WTC11 (cell line): ENCODE measurements at regions of chr14 and their contacts with region 1.

Region 1: DNA sequence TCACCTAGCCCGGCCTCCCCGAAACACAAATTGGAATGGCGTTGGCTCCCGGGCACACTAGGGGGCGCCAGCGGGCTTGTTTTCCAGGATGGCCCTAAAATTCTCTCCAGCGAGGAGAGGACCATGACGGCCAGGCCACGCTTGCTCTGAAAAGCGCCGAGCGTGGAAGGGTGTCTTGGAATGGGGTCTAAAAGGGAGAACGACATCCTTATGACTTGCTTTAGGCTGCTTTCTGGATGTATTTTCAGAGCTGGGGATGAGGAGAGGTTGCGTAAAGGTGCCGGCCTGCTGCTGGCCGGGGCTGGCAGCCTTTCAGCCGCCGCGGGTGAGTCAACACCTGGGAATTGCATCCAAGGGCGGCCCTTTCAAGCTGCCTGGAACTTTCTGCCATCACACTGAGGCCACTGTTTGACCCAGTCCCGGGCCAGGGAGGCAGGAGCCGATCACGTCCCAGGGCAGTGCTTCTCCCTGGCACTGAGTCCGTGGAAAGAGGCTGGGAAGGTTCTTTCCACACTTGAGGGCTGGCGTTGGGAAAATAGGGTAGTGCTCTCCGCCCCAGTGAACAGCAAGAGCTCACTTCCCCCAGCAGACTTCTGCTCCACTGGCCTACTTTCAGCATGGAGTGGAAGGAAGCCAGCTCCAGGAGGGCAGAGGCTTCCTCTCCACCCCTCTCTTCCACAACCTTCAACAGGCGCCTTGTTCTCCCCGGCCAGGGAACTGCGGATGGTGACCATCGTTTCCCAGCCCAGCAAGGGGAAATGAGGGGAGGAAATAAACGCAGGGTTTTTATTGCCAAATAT is 216.2 kb downstream of the TTC8 start:
- DNase-seq: peak; percentile 94
- ATAC-seq: peak; percentile 87
- H3K4me3 Mint-ChIP-seq: peak overlapping the region; percentile 61
- H3K27ac Mint-ChIP-seq: peak overlapping the region; percentile 58
- H3K4me1 Mint-ChIP-seq: peaks cover 19% of the 10 kb centered on the region
- H3K27me3 Mint-ChIP-seq: peaks cover 26% of the 10 kb centered on the region
- CTCF ChIP-seq: peak; percentile 96

Region 2: GRCh38 chr14:89027097-89027740 is 13.4 kb before region 1 on chr14:
- CTCF ChIA-PET with region 1: interaction called, 17 read pairs
- POLR2A ChIA-PET with region 1: no interaction called
- DNase-seq: peak; percentile 75
- ATAC-seq: peak; percentile 72
- H3K4me3 Mint-ChIP-seq: peak overlapping the region; percentile 83
- H3K27ac Mint-ChIP-seq: no peak overlapping the region
- H3K4me1 Mint-ChIP-seq: no peaks in the 10 kb centered on the region
- H3K27me3 Mint-ChIP-seq: peaks cover 77% of the 10 kb centered on the region
- CTCF ChIP-seq: peak; percentile 95

Region 3: DNA sequence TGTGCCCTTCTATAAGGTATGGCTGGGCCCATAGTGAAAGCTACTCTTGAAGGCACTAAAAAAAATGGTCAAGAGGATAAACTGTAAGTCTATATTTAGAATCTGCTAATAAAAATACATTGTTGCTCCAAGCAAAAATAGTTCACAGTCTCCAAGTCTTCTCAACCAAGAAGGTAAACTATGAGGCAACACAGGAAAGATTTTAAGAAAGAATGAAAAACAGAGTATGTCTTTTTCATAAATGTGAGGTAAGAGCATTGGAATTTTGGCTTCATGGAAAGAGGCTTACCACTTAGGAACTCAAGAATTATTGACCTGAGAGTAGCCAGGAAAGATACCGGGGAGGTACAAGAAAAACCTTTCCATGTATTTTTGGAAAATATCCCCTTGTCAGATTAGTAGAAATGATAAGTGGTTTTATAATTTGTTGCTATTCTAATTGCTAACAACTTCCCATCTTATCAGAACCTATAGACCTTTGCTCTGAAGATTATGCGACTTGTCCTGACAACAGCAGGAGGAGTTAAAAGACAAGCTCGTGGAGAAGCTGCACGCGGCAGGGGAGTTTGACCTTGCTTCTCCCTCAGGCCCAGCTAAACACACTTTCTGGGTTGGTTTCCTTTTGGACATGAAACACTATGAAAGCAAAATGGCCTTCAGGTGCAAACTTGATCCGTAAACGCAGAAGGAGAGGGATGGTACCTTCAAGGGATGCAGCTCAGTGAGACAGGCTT is 138.3 kb after region 1 on chr14:
- CTCF ChIA-PET with region 1: interaction called, 14 read pairs
- POLR2A ChIA-PET with region 1: no interaction called
- DNase-seq: no peak
- ATAC-seq: no peak
- H3K4me3 Mint-ChIP-seq: no peak overlapping the region
- H3K27ac Mint-ChIP-seq: peak overlapping the region; percentile 84
- H3K4me1 Mint-ChIP-seq: peaks cover 13% of the 10 kb centered on the region
- H3K27me3 Mint-ChIP-seq: no peaks in the 10 kb centered on the region
- CTCF ChIP-seq: no peak